ENCODE measurements at regions of chr4 and their contacts with region 1.

Region 1: DNA sequence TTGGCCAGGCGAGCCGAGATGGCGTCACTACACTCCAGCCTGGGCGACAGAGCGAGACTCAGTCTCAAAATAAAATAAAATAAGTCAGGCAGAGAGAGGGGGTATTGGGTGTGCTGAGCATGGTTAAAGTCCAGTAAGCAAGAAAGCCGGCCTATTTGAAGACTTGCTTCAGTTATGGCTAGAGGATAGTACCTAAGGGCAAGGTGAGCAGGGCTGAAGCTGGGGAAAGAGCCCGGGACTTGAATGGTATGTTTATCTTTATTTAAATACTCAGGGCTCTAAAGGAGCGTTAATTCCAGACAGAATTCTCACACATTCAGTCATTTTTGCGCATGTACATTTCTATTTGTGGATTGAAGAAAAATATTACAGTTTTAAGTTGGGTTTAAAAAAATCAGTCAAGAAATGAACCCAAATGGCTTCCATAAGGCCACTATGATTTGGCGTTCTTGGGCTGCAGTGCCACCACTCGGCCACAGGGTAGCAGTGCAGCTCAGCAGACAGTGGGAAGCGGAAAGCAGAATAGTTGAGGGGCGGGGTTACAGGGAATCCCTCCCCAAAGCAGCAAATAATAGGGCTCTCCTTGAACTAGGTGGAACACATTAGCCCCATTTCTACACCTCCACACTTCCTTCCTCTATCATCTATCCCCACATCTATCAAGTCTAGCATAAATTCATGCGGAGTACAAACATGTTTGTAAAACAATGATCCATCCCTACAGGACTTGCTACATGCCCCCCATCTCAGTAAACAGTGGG is 37.2 kb upstream of the SH3D19 start:
- DNase-seq: peak; percentile 76
- H3K4me3 ChIP-seq: no peak overlapping the region
- H3K27ac ChIP-seq: no peak overlapping the region
- H3K4me1 ChIP-seq: no peaks in the 10 kb centered on the region
- H3K27me3 ChIP-seq: no peaks in the 10 kb centered on the region
- CTCF ChIP-seq: peak; percentile 99

Region 2: DNA sequence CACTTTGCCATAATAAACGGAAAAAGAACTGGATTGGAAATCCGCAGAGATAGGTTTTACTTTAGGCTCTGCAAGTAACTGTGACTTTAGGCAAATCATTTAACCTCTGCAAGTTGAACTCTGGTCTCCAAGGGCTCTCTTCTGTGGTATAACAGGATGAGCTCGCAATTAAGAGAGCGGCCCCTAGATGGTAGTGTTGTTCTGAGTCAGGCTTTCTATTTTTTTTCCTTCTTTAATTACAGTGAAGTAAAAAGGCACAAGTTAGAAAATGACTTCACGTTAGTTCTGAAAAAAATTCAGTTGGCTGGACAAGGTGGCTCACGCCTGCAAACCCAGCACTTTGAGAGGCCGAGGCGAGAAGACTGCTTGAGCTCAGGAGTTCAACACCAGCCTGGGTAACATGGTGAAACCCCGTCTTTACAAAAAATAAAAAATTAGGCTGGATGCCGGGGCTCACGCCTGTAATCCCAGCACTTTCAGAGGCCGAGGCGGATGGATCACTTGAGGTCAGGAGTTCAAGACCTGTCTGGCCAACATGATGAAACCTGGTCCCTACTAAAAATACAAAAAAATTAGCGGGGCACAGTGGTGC is 245.1 kb before region 1 on chr4:
- intact Hi-C with region 1: loop called (anchors 5 kb)
- DNase-seq: peak; percentile 30
- H3K4me3 ChIP-seq: no peak overlapping the region
- H3K27ac ChIP-seq: peak overlapping the region; percentile 57
- H3K4me1 ChIP-seq: peaks cover 34% of the 10 kb centered on the region
- H3K27me3 ChIP-seq: no peaks in the 10 kb centered on the region
- CTCF ChIP-seq: peak; percentile 84

Region 3: GRCh38 chr4:151276787-151277562 is 85.6 kb before region 1 on chr4 and contains the start of gene PRSS48:
- intact Hi-C with region 1: loop called (anchors 10 kb)
- DNase-seq: peak; percentile 63
- H3K4me3 ChIP-seq: no peak within 1 kb of the TSS
- H3K27ac ChIP-seq: no peak within 1 kb of the TSS
- H3K4me1 ChIP-seq: peaks cover 68% of the 10 kb centered on the region
- H3K27me3 ChIP-seq: no peaks in the 10 kb centered on the region
- CTCF ChIP-seq: peak; percentile 81
- total RNA-seq, gene PRSS48: not detected

Region 4: DNA sequence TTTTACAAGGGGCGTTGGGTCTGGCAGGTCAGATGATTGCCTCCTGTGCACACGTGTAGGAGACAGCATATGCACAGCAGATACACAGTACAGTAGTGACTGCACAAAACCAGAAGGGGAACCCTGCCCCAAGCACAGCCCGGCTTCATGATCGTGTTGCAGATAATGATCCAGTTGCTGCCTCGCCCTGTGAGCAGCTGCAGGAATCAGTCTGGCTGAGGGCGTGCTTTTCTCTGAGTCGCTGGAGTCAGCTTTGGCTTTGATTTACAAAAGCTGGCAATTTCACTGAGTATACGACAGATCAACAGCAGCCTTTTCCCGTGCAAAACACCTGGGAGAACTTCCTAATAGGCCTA is 701.3 kb after region 1 on chr4:
- intact Hi-C with region 1: no loop called
- DNase-seq: no peak
- H3K4me3 ChIP-seq: no peak overlapping the region
- H3K27ac ChIP-seq: peak overlapping the region; percentile 36
- H3K4me1 ChIP-seq: peaks cover 23% of the 10 kb centered on the region
- H3K27me3 ChIP-seq: no peaks in the 10 kb centered on the region
- CTCF ChIP-seq: no peak

Measured in left ventricle myocardium inferior (tissue), 1 donor.